Transverse colon (tissue), 4 donors: ENCODE measurements at regions of chr11 and their contacts with region 1.

Region 1: GRCh38 chr11:118689851-118690552 is 10.6 kb upstream of the TREH start:
- DNase-seq: peak; percentile 85
- H3K4me3 ChIP-seq: peak overlapping the region; percentile 19 to 42 (median 29)
- H3K27ac ChIP-seq: peak overlapping the region; percentile 46 to 78 (median 72)
- H3K4me1 ChIP-seq: peaks cover 4 to 21% (median 12%) of the 10 kb centered on the region in 4 donors
- H3K27me3 ChIP-seq: no peaks in the 10 kb centered on the region
- CTCF ChIP-seq: peak; percentile 74 to 97 (median 90)
- EP300 ChIP-seq: no peak
- POLR2A ChIP-seq: no peak

Region 2: GRCh38 chr11:118735203-118735602 is 45.2 kb after region 1 on chr11:
- in situ Hi-C with region 1: no loop called
- intact Hi-C with region 1: no loop called
- DNase-seq: no peak
- H3K4me3 ChIP-seq: no peak overlapping the region
- H3K27ac ChIP-seq: no peak overlapping the region
- H3K4me1 ChIP-seq: no peaks in the 10 kb centered on the region
- H3K27me3 ChIP-seq: no peaks in the 10 kb centered on the region
- CTCF ChIP-seq: no peak
- EP300 ChIP-seq: no peak
- POLR2A ChIP-seq: no peak

Region 3: GRCh38 chr11:118791111-118791965 is 101.3 kb after region 1 on chr11 and contains the start of gene DDX6:
- in situ Hi-C with region 1: loop called in 2 of 4 experiments (anchors 10 to 25 kb)
- intact Hi-C with region 1: no loop called
- DNase-seq: peak; percentile 92
- H3K4me3 ChIP-seq: peak within 1 kb of the TSS; percentile 63 to 92 (median 80)
- H3K27ac ChIP-seq: peak within 1 kb of the TSS; percentile 96 to 100 (median 98)
- H3K4me1 ChIP-seq: peaks cover 9 to 45% (median 34%) of the 10 kb centered on the region in 4 donors
- H3K27me3 ChIP-seq: no peaks in the 10 kb centered on the region
- CTCF ChIP-seq: peak; percentile 5 to 47 (median 39)
- EP300 ChIP-seq: no peak
- POLR2A ChIP-seq: peak; percentile 96
- total RNA-seq, gene DDX6: 56.1 to 117 (median 86.8) TPM

Region 4: GRCh38 chr11:118889781-118890180 is 199.8 kb after region 1 on chr11:
- in situ Hi-C with region 1: no loop called
- intact Hi-C with region 1: loop called (anchors 5 kb)
- DNase-seq: no peak
- H3K4me3 ChIP-seq: no peak overlapping the region
- H3K27ac ChIP-seq: peak overlapping the region in 3 of 4 donors; percentile 70 to 84 (median 74)
- H3K4me1 ChIP-seq: peaks cover 0 to 37% (median 12%) of the 10 kb centered on the region in 4 donors
- H3K27me3 ChIP-seq: no peaks in the 10 kb centered on the region
- CTCF ChIP-seq: no peak
- EP300 ChIP-seq: no peak
- POLR2A ChIP-seq: no peak

Region 5: DNA sequence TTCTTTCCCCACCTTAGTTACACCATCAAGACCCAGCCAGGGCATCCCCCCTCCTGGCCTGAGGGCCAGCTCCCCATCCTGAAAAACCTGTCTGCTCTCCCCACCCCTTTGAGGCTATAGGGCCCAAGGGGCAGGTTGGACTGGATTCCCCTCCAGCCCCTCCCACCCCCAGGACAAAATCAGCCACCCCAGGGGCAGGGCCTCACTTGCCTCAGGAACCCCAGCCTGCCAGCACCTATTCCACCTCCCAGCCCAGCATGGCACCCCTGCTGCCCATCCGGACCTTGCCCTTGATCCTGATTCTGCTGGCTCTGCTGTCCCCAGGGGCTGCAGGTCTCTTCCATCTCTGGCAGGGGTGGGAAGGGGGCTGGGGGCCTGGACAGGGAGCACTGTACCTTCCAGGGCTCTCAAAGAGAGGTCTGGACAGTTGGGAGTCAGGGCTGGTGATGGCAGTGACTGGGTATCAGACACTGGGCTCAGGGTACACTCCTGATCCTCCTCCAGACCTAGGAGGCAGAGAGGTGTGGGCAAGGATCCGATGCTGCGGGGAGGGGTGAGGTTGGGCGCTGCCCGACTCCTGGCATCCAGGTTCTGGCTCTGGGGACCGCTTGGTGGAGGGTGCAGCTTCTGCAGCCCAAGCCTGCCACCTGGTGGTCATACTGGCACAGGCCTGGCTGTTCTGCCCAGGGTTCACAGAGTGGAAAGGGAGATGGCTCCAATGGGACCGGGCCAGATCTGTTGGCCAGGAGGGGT is 266.3 kb after region 1 on chr11 and contains the start of gene UPK2:
- in situ Hi-C with region 1: loop called (anchors 5 to 25 kb)
- intact Hi-C with region 1: loop called (anchors 2 kb)
- DNase-seq: peak; percentile 91
- H3K4me3 ChIP-seq: no peak within 1 kb of the TSS
- H3K27ac ChIP-seq: no peak within 1 kb of the TSS
- H3K4me1 ChIP-seq: peaks cover 0 to under 1% (median 0%) of the 10 kb centered on the region in 4 donors
- H3K27me3 ChIP-seq: peaks cover 15% of the 10 kb centered on the region
- CTCF ChIP-seq: peak; percentile 91 to 97 (median 95)
- EP300 ChIP-seq: no peak
- POLR2A ChIP-seq: no peak
- total RNA-seq, gene UPK2: not detected